ENCODE measurements at regions of chr16 and their contacts with region 1.

Region 1: DNA sequence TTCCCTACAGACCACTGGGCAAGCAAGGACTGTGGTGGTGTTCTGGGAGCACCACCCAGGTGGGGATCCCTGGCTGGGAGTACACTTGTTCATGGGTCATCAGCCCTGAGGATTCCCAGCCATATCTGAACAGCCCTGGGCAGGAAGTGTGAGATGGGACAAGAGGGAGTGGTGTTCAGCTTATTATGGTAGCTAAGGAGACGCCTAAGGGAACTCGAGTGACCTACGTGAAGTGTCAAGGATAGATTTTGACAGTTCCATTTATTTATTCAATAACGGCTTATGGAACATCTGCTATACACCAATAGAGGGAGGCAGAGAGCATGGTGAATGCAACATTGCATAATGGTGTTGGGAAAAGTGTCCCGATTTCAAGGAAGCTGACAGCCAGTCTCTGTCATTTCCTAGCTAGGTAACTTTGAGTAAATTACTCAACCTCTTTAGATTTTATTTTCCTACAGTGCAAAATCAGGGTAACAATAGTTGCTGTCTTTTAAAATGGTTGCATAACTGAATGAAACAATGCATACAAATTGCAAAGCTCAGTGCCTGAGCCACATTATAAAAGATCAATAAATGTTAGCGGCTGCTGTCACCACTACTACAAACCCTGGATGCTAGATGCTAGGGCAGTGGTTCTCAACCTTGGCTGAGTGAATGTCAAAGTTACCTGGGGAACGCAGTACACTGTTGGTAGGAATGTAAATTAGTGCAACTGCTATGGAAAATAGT is 534.1 kb downstream of the GRIN2A start:
- DNase-seq: no peak
- ATAC-seq: peak; percentile 52
- H3K4me3 Mint-ChIP-seq: no peak overlapping the region
- H3K27ac Mint-ChIP-seq: no peak overlapping the region
- H3K4me1 Mint-ChIP-seq: peaks cover 49% of the 10 kb centered on the region
- H3K27me3 Mint-ChIP-seq: peaks cover 3% of the 10 kb centered on the region; the same call in 1 of the 2 replicates
- CTCF ChIP-seq: peak; percentile 42

Region 2: GRCh38 chr16:9670033-9670432 is 21.9 kb after region 1 on chr16:
- CTCF ChIA-PET with region 1: interaction called, 17 read pairs
- POLR2A ChIA-PET with region 1: no interaction called
- DNase-seq: no peak
- ATAC-seq: peak; percentile 90
- H3K4me3 Mint-ChIP-seq: no peak overlapping the region
- H3K27ac Mint-ChIP-seq: no peak overlapping the region
- H3K4me1 Mint-ChIP-seq: peaks cover 21% of the 10 kb centered on the region
- H3K27me3 Mint-ChIP-seq: no peaks in the 10 kb centered on the region
- CTCF ChIP-seq: no peak

Region 3: DNA sequence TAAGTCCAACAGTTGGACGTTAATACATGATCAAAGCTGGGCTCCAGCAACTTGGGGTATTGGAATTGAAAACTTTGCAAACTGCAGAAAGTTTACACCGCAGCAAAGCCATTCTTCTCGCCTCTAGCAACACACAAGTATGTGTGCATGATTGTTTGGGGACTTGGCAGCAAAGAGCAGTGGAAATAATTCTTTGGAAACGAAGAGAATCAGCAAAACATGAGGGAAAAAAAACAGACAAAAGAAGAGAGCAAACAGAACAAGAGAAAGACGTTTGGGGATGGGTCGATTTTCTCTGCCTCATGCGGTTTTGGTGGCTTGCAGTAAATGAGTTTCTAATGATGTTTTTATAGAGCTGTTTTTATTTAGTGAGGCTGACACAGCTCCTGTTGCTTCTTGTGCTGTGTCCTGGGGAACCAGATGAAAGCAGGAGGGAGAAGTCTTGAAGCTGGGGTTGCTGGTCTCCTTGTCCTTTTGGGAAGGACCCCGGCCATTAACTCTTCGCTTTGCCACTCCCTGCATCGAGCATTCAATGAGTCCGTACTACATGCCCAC is 31.1 kb after region 1 on chr16:
- CTCF ChIA-PET with region 1: interaction called, 15 read pairs
- POLR2A ChIA-PET with region 1: interaction called, 5 read pairs
- DNase-seq: no peak
- ATAC-seq: no peak
- H3K4me3 Mint-ChIP-seq: peak overlapping the region; percentile 80
- H3K27ac Mint-ChIP-seq: peak overlapping the region; percentile 95
- H3K4me1 Mint-ChIP-seq: peaks cover 54% of the 10 kb centered on the region
- H3K27me3 Mint-ChIP-seq: 0 out of 2 replicates have a peak, but pooled peaks cover 4% of the 10 kb centered on the region
- CTCF ChIP-seq: no peak